ENCODE measurements at regions of chr7 and their contacts with region 1.

Region 1: GRCh38 chr7:106056513-106057203 is 55.5 kb downstream of the SYPL1 start:
- DNase-seq: peak; percentile 55
- ATAC-seq: peak; percentile 53
- H3K4me3 Mint-ChIP-seq: peak overlapping the region; percentile 71
- H3K27ac Mint-ChIP-seq: peak overlapping the region; percentile 99
- H3K4me1 Mint-ChIP-seq: peaks cover 65% of the 10 kb centered on the region
- H3K27me3 Mint-ChIP-seq: no peaks in the 10 kb centered on the region
- CTCF ChIP-seq: peak; percentile 65

Region 2: GRCh38 chr7:104943502-104944343 is 1112.9 kb before region 1 on chr7:
- CTCF ChIA-PET with region 1: no interaction called
- POLR2A ChIA-PET with region 1: no interaction called
- intact Hi-C with region 1: loop called (anchors 5 kb)
- DNase-seq: peak; percentile 53
- ATAC-seq: peak; percentile 9
- H3K4me3 Mint-ChIP-seq: peak overlapping the region; percentile 98
- H3K27ac Mint-ChIP-seq: peak overlapping the region; percentile 100
- H3K4me1 Mint-ChIP-seq: peaks cover 83% of the 10 kb centered on the region
- H3K27me3 Mint-ChIP-seq: no peaks in the 10 kb centered on the region
- CTCF ChIP-seq: no peak

Region 3: GRCh38 chr7:106080300-106080987 is 23.8 kb after region 1 on chr7:
- CTCF ChIA-PET with region 1: interaction called, 152 read pairs
- POLR2A ChIA-PET with region 1: interaction called, 402 read pairs
- intact Hi-C with region 1: no loop called
- DNase-seq: no peak
- ATAC-seq: no peak
- H3K4me3 Mint-ChIP-seq: no peak overlapping the region
- H3K27ac Mint-ChIP-seq: peak overlapping the region; percentile 69
- H3K4me1 Mint-ChIP-seq: peaks cover 89% of the 10 kb centered on the region
- H3K27me3 Mint-ChIP-seq: no peaks in the 10 kb centered on the region
- CTCF ChIP-seq: no peak

Region 4: GRCh38 chr7:106094800-106095199 is 38.1 kb after region 1 on chr7:
- CTCF ChIA-PET with region 1: interaction called, 62 read pairs
- POLR2A ChIA-PET with region 1: interaction called, 39 read pairs
- intact Hi-C with region 1: loop called (anchors 1 kb)
- DNase-seq: no peak
- ATAC-seq: peak; percentile 64
- H3K4me3 Mint-ChIP-seq: no peak overlapping the region
- H3K27ac Mint-ChIP-seq: peak overlapping the region; percentile 72
- H3K4me1 Mint-ChIP-seq: peaks cover 75% of the 10 kb centered on the region
- H3K27me3 Mint-ChIP-seq: no peaks in the 10 kb centered on the region
- CTCF ChIP-seq: no peak

Region 5: DNA sequence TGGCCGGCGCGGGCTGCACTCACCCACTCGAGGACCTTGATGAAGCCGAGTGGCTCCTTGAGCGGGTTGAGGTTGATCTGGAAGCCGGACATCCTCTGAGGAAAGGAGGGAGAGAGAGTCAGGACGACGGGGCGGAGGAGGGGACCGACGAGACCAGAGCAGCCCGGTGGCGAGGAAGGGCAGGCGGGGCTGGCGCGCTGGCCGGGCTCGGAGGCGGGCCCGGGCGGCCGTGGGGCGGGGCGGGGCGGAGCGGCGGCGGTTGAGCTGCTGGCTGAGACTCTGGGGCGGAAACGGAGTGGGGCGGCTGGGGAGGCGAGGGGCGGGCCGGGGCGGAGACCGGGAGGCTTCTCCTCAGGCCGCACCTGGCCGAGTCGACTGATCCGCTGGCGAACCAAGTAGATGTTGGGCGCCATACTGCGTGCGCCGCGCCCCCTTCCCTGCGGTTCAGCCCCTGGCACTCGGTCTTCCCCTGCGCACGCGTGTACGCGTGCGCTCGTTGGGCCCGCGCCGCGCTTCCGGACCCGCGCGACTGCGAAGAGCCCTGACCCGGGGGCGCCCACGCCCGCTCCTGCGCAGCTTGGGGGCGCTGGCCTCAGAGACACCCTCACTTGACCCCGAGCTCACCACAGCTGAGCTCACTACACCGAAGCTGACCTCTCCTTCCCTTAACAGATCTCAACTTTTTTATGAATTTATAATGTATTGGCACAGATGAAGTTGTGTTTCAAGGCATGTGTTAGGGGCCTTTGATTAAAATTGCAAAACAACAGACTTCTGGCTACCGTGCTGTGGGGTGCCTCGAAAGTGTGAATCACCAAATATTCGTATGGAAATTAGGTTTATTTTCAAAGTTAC is 55.7 kb after region 1 on chr7 and contains the start of gene SYPL1:
- CTCF ChIA-PET with region 1: interaction called, 41 read pairs
- POLR2A ChIA-PET with region 1: interaction called, 351 read pairs
- intact Hi-C with region 1: loop called (anchors 1 kb)
- DNase-seq: peak; percentile 94
- ATAC-seq: peak; percentile 76
- H3K4me3 Mint-ChIP-seq: peak within 1 kb of the TSS; percentile 94
- H3K27ac Mint-ChIP-seq: peak within 1 kb of the TSS; percentile 97
- H3K4me1 Mint-ChIP-seq: peaks cover 80% of the 10 kb centered on the region
- H3K27me3 Mint-ChIP-seq: no peaks in the 10 kb centered on the region
- CTCF ChIP-seq: no peak
- total RNA-seq, gene SYPL1: 109 and 116 TPM in 2 replicates

Region 6: GRCh38 chr7:106425017-106425719 is 368.5 kb after region 1 on chr7:
- CTCF ChIA-PET with region 1: no interaction called
- POLR2A ChIA-PET with region 1: no interaction called
- intact Hi-C with region 1: loop called (anchors 5 kb)
- DNase-seq: peak; percentile 36
- ATAC-seq: peak; percentile 90
- H3K4me3 Mint-ChIP-seq: peak overlapping the region; percentile 72
- H3K27ac Mint-ChIP-seq: peak overlapping the region; percentile 94
- H3K4me1 Mint-ChIP-seq: peaks cover 34% of the 10 kb centered on the region
- H3K27me3 Mint-ChIP-seq: no peaks in the 10 kb centered on the region
- CTCF ChIP-seq: no peak

Measured in activated B cell treated with CpG ODN at 0.5 μM for 24 hours (primary cell).